ENCODE measurements at regions of chrX and their contacts with region 1.

Region 1: GRCh38 chrX:49237060-49237459 is 1.8 kb downstream of the CCDC22 start:
- DNase-seq: peak in 1 of 2 donors; percentile 55
- ATAC-seq: no peak
- H3K4me3 ChIP-seq: no peak overlapping the region
- H3K27ac ChIP-seq: no peak overlapping the region
- H3K4me1 ChIP-seq: no peaks in the 10 kb centered on the region
- H3K27me3 ChIP-seq: no peaks in the 10 kb centered on the region

Region 2: DNA sequence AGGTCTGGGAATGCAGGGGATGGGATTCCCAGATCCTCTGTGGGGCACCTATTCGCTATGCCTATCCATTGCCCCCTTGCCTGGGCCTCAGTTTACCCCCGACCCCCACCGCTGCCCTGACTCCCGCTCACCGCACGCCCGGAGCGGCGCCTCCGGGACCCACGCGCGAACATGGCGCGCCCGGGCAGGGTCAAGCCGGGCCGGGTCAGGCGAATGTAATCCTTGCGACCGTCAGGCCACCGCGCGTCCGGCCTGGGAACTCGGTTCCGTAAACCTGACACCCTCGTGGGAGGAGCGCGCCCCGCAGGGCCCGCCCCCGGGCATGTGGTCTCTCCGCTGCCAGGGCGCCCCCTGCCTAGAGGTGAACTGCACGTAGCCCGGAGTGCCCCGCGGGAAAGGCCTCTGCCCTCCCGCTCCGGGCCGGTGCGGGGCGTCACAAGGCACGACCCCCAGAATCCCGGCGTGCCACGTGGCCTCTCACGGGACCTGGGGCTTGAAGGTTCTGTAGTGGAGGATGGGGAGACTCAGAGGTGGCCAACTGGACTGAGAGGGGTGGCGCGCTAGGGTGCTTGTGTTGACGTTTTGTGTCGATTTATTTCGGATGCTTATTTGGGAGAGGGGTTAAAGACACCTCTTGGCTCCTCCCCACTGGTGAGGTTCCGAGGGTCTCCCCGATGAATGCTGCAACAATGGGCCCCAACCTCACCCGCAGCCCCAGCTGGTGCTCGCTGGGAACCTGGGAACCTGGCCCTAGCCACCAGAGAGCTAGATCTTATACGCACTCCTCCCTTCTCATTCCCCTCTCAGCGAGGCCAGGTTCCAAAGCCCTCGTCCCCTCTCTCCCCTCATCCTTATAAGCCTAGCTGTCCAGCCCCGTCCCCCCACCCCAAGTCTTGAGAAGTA is 50.7 kb before region 1 on chrX and contains the start of gene PRICKLE3:
- intact Hi-C with region 1: no loop called
- DNase-seq: peak; percentile 90 to 93
- ATAC-seq: peak; percentile 70
- H3K4me3 ChIP-seq: peak within 1 kb of the TSS; percentile 27 to 85
- H3K27ac ChIP-seq: peak within 1 kb of the TSS in 1 of 2 donors; percentile 79
- H3K4me1 ChIP-seq: no peaks in the 10 kb centered on the region
- H3K27me3 ChIP-seq: no peaks in the 10 kb centered on the region
- total RNA-seq, gene PRICKLE3: 11.9 to 13.3 TPM

Region 3: DNA sequence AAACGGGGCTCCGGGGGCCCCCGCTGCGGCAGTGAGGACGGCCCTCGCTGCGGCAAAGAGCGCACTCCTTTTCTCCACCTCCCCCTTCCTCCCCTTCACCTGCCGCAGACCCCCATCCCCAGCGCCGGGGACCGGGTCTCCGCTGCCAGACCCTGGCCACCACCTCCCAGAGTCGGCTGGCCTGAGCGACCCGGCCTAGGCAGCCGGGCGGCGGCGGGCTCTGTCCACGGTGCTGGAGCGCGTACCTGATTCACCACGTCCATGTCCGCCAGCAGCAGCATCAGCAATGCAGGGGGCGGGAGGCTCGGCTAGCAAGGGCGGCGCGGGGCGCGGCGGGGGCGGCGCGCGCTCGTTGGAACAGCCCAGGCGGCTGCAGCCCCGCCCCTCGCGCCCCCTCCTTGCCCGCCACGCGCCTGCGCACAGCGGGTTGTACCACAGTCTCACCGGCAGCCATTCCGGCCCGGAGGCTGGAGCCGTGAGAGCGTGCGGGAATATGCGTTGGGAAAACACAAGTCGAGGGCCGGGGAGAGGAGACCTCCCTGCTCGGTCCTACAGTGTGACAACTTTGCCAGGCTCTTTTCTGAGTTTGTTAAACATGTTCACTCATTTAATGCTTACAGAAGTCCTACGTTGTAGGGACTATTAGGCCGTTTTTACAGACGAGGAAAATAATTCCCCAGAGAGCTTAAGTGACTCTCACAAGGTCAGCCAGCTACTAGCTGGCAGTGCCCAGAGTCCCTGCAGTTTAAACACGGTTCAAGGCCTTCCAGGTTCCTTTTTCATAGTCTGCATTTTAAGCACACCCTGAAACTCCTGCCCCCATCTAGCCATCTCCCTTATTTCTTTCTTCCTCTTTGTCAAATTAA is 36.9 kb before region 1 on chrX and contains the start of gene SYP:
- intact Hi-C with region 1: loop called in 1 of 2 experiments (anchors 5 kb)
- DNase-seq: peak; percentile 91 to 96
- ATAC-seq: peak; percentile 92
- H3K4me3 ChIP-seq: no peak within 1 kb of the TSS
- H3K27ac ChIP-seq: no peak within 1 kb of the TSS
- H3K4me1 ChIP-seq: no peaks in the 10 kb centered on the region
- H3K27me3 ChIP-seq: no peaks in the 10 kb centered on the region
- total RNA-seq, gene SYP: 2.4 to 4.5 TPM

Measured in aorta (tissue), 5 donors.